Sigmoid colon (tissue), 7 donors: ENCODE measurements at regions of chrX and their contacts with region 1.

Region 1: GRCh38 chrX:3811331-3812311 is 98.2 kb upstream of the PRKX start:
- DNase-seq: no peak
- H3K4me3 ChIP-seq: no peak overlapping the region
- H3K27ac ChIP-seq: no peak overlapping the region
- H3K4me1 ChIP-seq: peaks cover 0 to 17% (median 1%) of the 10 kb centered on the region in 4 donors
- H3K27me3 ChIP-seq: no peaks in the 10 kb centered on the region
- CTCF ChIP-seq: peak in 1 of 4 experiments; percentile 40
- EP300 ChIP-seq: no peak
- POLR2A ChIP-seq: no peak

Region 2: GRCh38 chrX:2325076-2325784 is 1486.4 kb before region 1 on chrX:
- intact Hi-C with region 1: loop called (anchors 10 kb)
- DNase-seq: peak; percentile 96
- H3K4me3 ChIP-seq: peak overlapping the region in 3 of 4 donors; percentile 30 to 52 (median 39)
- H3K27ac ChIP-seq: peak overlapping the region; percentile 10 to 75 (median 67)
- H3K4me1 ChIP-seq: peaks cover 0 to 9% (median 8%) of the 10 kb centered on the region in 4 donors
- H3K27me3 ChIP-seq: no peaks in the 10 kb centered on the region
- CTCF ChIP-seq: no peak
- EP300 ChIP-seq: no peak
- POLR2A ChIP-seq: no peak

Region 3: DNA sequence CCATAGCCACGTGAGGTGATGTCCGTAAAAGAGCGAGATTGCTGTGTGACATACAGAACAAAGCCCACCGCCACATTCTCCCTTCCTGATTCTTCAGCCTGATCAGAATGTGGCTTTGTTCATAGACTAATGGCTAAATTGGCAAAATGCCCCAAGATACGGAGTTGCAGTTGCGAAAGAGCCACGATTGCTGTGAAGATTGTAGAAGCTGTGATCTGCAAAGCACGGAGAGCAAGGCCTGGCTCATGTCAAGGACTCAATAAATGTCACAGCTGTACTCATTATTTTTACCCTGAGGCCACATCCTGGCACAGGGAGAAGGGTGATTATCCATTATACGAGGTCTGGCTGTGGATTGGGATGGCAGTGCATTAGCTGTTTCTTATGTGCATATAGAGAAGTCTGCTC is 916.7 kb before region 1 on chrX:
- intact Hi-C with region 1: loop called (anchors 10 kb)
- DNase-seq: peak; percentile 88
- H3K4me3 ChIP-seq: no peak overlapping the region
- H3K27ac ChIP-seq: peak overlapping the region in 3 of 4 donors; percentile 22 to 61 (median 22)
- H3K4me1 ChIP-seq: peaks cover 0 to 19% (median 11%) of the 10 kb centered on the region in 4 donors
- H3K27me3 ChIP-seq: no peaks in the 10 kb centered on the region
- CTCF ChIP-seq: no peak
- EP300 ChIP-seq: peak; percentile 23 to 78 (median 38)
- POLR2A ChIP-seq: no peak

Region 4: GRCh38 chrX:3638280-3638873 is 173.2 kb before region 1 on chrX:
- intact Hi-C with region 1: no loop called
- DNase-seq: no peak
- H3K4me3 ChIP-seq: no peak overlapping the region
- H3K27ac ChIP-seq: no peak overlapping the region
- H3K4me1 ChIP-seq: no peaks in the 10 kb centered on the region
- H3K27me3 ChIP-seq: no peaks in the 10 kb centered on the region
- CTCF ChIP-seq: peak in 3 of 4 experiments; percentile 15 to 42 (median 17)
- EP300 ChIP-seq: no peak
- POLR2A ChIP-seq: no peak

Region 5: DNA sequence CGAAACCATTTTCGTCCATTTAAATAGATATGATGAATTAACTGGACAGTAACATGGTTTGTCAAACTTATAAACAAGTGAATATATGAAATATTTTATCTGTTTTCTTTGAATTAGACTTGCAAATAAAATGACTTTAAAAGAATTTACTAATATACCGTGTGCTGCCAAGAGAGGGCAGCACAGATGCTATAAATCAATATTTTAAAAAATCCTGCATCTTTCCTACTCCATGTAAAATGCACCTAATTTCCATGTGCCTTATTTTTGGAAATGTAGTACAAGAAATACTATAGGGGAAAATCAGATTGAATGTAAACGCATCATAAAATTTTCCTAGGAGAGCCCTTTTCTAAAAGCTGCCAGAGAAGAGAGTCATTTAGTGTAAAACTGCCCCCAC is 160.3 kb before region 1 on chrX:
- intact Hi-C with region 1: loop called (anchors 10 kb)
- DNase-seq: no peak
- H3K4me3 ChIP-seq: no peak overlapping the region
- H3K27ac ChIP-seq: no peak overlapping the region
- H3K4me1 ChIP-seq: no peaks in the 10 kb centered on the region
- H3K27me3 ChIP-seq: no peaks in the 10 kb centered on the region
- CTCF ChIP-seq: peak in 2 of 4 experiments; percentile 11 to 20
- EP300 ChIP-seq: no peak
- POLR2A ChIP-seq: no peak

Region 6: DNA sequence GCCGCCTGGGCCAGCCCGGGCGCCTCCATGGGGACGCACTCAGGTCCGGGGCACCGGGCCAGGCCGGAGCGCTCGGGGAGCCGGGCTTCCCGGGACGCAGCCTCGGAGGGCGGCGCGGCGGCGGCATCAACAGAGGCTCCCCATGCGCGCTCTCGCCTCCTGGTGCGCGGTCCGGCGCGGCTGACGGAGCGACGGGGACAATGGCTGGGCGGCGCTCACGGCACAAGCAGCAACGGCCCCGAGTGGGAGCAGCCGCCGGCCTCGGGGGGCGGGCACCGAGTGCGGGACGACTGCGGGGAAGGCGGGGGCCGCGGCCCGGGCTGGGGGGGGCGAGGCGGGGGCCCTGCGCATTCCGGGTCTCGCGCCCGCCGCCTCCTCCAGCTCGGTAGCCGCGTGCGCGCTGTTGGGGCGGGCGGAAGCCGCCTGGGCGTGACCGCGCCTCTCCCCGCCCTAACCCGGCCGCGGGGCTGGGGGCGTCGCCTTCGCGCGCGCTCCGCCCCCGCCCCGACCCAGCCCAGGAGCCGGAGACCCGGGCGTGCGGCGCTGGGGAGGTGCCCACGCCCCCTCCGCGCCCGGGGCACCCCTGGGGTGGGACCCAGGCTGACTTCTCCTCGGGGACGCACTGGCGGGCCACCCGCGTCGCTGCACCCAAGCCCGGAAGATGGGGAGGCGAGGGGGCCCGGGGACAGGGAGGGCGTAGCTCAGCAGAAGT is 98.2 kb before region 1 on chrX and contains the start of gene PRKX:
- intact Hi-C with region 1: loop called (anchors 10 kb)
- DNase-seq: peak; percentile 65
- H3K4me3 ChIP-seq: peak within 1 kb of the TSS; percentile 46 to 67 (median 59)
- H3K27ac ChIP-seq: peak within 1 kb of the TSS; percentile 53 to 76 (median 65)
- H3K4me1 ChIP-seq: peaks cover 0 to 9% (median 0%) of the 10 kb centered on the region in 4 donors
- H3K27me3 ChIP-seq: no peaks in the 10 kb centered on the region
- CTCF ChIP-seq: no peak
- EP300 ChIP-seq: no peak
- POLR2A ChIP-seq: no peak
- total RNA-seq, gene PRKX: 4.2 to 7.8 (median 6.4) TPM